ENCODE measurements at regions of chr2 and their contacts with region 1.

Region 1: DNA sequence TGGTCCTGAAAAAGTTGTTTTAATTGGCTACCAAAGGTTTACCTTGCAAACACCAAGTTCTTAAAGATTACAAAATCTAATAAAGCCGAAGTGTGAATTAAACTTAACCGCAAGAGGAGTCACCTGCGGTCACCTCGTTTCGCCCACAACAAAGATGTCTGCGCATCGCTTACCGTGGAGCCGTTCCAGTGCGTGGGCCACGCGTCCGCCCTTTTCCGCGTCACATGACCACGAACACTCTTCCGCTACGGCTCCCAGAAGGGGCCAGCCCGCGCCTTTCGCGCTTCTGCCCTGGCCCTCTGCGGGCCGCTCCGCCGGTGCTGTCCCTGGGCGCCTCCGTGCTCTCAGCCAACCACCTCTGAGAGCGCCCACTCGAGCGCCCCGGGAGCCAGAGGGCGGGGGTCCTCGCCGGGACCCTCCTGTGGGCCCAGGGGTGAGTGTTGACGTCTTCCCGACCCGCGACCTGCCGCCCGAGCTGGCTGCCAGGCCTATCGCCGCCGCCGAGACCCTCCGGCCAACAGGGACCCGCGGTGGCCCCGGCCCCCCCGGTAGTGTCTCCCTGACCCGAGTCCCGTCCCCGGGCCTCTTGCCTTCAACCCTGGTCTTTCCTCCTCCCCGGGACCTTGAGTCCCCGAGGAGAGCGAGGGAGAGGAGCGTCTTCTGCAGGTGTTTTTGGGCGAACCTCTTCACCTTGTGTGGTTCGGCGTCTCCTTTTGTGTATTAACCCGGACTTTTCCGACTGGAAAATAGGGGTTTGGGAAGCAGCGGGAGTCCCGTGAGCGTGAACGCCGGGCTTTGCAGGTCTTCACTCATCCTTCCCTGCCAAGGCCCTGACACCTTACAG is at the start of gene MFF:
- DNase-seq: peak; percentile 87
- ATAC-seq: peak; percentile 98
- H3K4me3 Mint-ChIP-seq: peak within 1 kb of the TSS; percentile 95
- H3K27ac Mint-ChIP-seq: peak within 1 kb of the TSS; percentile 91
- H3K4me1 Mint-ChIP-seq: peaks cover 33% of the 10 kb centered on the region
- H3K27me3 Mint-ChIP-seq: no peaks in the 10 kb centered on the region
- CTCF ChIP-seq: no peak
- total RNA-seq, gene MFF: 66.4 and 78.9 TPM in 2 replicates

Region 2: GRCh38 chr2:227163998-227164762 is 161.0 kb before region 1 on chr2 and contains the starts of genes COL4A3 and COL4A4:
- CTCF ChIA-PET with region 1: no interaction called
- POLR2A ChIA-PET with region 1: no interaction called
- intact Hi-C with region 1: loop called (anchors 2 kb)
- DNase-seq: peak; percentile 54
- ATAC-seq: peak; percentile 78
- H3K4me3 Mint-ChIP-seq: peak within 1 kb of the TSS; percentile 87
- H3K27ac Mint-ChIP-seq: peak within 1 kb of the TSS; percentile 89
- H3K4me1 Mint-ChIP-seq: peaks cover 44% of the 10 kb centered on the region
- H3K27me3 Mint-ChIP-seq: peaks cover 5% of the 10 kb centered on the region
- CTCF ChIP-seq: no peak
- total RNA-seq, gene COL4A3: 15.5 and 18.3 TPM in 2 replicates
- total RNA-seq, gene COL4A4: 9.3 and 10.9 TPM in 2 replicates

Region 3: GRCh38 chr2:227238238-227239237 is 86.7 kb before region 1 on chr2:
- CTCF ChIA-PET with region 1: no interaction called
- POLR2A ChIA-PET with region 1: no interaction called
- intact Hi-C with region 1: no loop called
- DNase-seq: peak; percentile 28
- ATAC-seq: peak; percentile 37
- H3K4me3 Mint-ChIP-seq: no peak overlapping the region
- H3K27ac Mint-ChIP-seq: no peak overlapping the region
- H3K4me1 Mint-ChIP-seq: no peaks in the 10 kb centered on the region
- H3K27me3 Mint-ChIP-seq: no peaks in the 10 kb centered on the region
- CTCF ChIP-seq: peak; percentile 99

Region 4: DNA sequence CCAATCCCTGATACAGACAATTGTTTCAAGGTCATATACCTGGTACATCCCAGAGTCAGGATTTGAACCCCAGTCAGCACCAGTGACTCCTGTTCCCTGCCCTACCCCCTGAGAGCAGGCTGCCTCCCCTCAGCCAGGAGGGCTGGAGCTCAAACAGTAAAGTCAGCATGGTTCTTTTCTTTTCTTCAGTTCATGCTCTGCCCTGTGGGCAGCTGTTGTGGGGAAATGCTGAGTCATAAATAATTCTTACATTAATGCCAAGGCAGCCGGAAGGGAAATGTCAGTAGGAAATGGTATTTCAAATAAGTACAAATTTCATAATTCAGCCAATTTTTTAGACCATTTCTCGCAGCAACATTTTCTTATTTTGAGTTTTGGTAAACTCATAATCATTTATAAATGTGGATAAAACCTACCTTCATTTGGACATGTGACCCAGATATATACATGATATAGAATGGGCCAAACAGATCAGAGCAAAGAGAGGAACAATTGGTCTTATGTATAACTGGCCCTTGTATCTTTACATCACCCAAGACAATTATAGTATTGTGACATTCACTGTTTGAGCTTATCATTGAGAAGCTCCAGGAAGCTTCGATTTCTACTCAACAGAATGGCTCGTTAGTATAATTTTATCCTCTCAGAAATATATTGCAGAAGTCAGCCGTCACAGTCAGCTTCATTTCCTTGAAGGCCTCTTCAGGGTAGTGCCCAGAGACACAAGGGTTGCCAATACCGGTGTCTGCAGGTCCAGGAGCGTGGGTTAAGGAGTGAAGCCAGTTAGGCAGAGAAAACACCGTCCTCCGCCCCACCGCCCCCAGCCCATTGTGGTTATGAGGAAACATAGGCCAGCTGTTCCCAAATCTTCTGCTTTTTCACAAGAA is 90.6 kb after region 1 on chr2:
- CTCF ChIA-PET with region 1: no interaction called
- POLR2A ChIA-PET with region 1: no interaction called
- intact Hi-C with region 1: loop called (anchors 1 kb)
- DNase-seq: no peak
- ATAC-seq: peak; percentile 41
- H3K4me3 Mint-ChIP-seq: no peak overlapping the region
- H3K27ac Mint-ChIP-seq: peak overlapping the region; percentile 69
- H3K4me1 Mint-ChIP-seq: peaks cover 47% of the 10 kb centered on the region
- H3K27me3 Mint-ChIP-seq: no peaks in the 10 kb centered on the region
- CTCF ChIP-seq: no peak

Measured in activated B cell treated with CpG ODN at 0.5 μM for 24 hours (primary cell).